Activated CD4-positive, alpha-beta T cell treated with anti-CD3 and anti-CD28 coated beads for 36 hours (primary cell): ENCODE measurements at regions of chr7 and their contacts with region 1.

Region 1: DNA sequence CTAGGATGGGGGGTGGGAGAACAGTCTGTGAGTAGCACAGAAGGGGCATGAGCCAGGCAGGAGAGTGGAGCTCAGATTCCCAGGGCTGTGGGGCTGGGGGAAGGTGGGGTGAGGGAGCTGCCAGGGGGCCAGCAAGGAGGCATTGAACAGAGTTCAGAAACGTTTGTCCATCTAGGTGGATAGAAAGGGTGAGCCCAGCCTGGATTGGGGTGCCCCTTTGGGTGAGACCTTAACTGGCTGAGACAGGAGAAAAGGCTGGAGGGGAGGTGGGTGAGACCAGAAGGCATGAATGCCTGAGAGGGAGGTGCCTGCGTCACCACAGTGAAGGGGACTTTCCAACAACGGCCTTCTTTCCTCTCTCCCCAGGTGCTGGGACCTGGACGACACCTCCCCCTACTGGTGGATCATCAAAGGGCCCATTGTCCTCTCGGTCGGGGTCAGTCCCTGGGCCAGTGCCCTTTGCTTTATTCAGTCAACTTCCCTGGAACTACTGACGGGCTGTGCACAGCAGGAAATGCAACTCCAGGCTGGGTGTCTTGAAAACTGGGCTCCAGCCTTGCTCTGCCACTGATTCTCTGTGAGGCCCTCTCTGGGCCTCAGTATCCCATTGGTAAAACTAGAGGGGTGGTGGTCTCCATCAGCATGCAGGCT is 11.0 kb downstream of the GHRHR start:
- DNase-seq: peak; percentile 81
- ATAC-seq: peak; percentile 95
- H3K4me3 Mint-ChIP-seq: no peak overlapping the region
- H3K27ac Mint-ChIP-seq: no peak overlapping the region
- H3K4me1 Mint-ChIP-seq: peaks cover 2% of the 10 kb centered on the region
- H3K27me3 Mint-ChIP-seq: peaks cover 26% of the 10 kb centered on the region

Region 2: GRCh38 chr7:30702200-30702599 is 272.5 kb before region 1 on chr7:
- CTCF ChIA-PET with region 1: no interaction called
- POLR2A ChIA-PET with region 1: no interaction called
- intact Hi-C with region 1: loop called in 1 of 2 experiments (anchors 10 kb)
- DNase-seq: peak; percentile 55
- ATAC-seq: peak; percentile 61
- H3K4me3 Mint-ChIP-seq: no peak overlapping the region
- H3K27ac Mint-ChIP-seq: no peak overlapping the region
- H3K4me1 Mint-ChIP-seq: peaks cover 3% of the 10 kb centered on the region
- H3K27me3 Mint-ChIP-seq: no peaks in the 10 kb centered on the region

Region 3: GRCh38 chr7:30938435-30939316 is 36.1 kb before region 1 on chr7:
- CTCF ChIA-PET with region 1: interaction called, 14 read pairs
- POLR2A ChIA-PET with region 1: no interaction called
- intact Hi-C with region 1: loop called (anchors 1 to 2 kb)
- DNase-seq: peak; percentile 83
- ATAC-seq: peak; percentile 84
- H3K4me3 Mint-ChIP-seq: no peak overlapping the region
- H3K27ac Mint-ChIP-seq: no peak overlapping the region
- H3K4me1 Mint-ChIP-seq: no peaks in the 10 kb centered on the region
- H3K27me3 Mint-ChIP-seq: peaks cover 17% of the 10 kb centered on the region